A673 (cell line): ENCODE measurements at regions of chr14 and their contacts with region 1.

Region 1: DNA sequence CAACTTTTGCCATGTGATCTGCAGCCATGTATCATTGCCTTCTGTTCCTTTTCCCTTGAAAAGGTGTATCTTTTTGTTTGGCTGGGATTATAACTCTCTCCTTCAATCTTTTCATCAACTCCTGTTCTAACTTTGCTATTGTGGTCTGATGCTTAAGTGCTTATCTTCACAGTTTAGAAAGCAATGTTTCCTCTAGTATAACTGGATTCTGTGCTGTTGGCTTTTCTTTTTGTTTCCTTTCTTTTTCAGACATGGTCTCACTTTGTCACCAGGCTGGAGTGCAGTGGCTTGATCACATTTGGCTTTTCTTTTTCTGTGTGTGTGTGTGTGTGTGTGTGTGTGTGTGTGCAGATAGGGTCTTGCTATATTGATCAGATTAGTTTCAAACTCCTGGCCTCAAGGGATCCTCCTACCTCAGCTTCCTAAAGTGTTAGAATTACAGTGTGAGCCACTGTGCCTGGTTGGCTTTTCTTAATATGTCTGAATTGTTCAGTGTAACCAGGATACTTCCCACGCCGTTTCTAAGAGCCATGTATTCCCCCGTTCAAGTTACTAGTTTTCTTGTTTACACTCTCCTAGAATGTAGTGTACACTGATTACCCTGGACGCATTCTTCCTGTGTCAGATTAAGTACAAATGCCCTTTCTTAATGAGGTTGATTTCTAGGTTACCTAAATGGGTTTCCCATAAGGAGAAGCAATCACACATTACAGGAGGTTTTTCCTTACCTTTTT is 35.5 kb downstream of the JAG2 start:
- DNase-seq: no peak
- H3K4me3 ChIP-seq: no peak overlapping the region
- H3K27ac ChIP-seq: no peak overlapping the region
- H3K4me1 ChIP-seq: no peaks in the 10 kb centered on the region
- H3K27me3 ChIP-seq: no peaks in the 10 kb centered on the region
- CTCF ChIP-seq: no peak

Region 2: DNA sequence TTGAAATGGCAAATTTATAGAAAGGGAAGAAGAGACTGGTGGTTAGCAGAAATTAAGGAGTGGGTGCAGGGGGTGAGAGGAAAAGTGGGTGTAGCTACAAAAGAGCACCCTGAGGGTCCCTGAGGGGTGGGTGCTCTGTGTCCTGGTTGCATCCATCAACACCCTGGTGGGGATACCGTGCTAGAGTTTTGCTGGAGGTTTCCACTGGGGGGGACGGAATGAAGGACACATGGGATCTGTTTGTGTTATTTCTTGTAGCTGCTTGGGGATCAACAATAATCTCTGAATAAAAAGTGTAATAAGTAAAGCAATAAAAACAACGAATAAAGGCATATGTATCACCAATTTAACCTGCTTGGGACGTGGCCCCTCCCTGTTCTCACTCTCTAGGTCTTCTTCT is 819.4 kb before region 1 on chr14:
- CTCF ChIA-PET with region 1: no interaction called
- POLR2A ChIA-PET with region 1: interaction called, 25 read pairs
- intact Hi-C with region 1: no loop called
- DNase-seq: no peak
- H3K4me3 ChIP-seq: no peak overlapping the region
- H3K27ac ChIP-seq: no peak overlapping the region
- H3K4me1 ChIP-seq: no peaks in the 10 kb centered on the region
- H3K27me3 ChIP-seq: no peaks in the 10 kb centered on the region
- CTCF ChIP-seq: no peak

Region 3: DNA sequence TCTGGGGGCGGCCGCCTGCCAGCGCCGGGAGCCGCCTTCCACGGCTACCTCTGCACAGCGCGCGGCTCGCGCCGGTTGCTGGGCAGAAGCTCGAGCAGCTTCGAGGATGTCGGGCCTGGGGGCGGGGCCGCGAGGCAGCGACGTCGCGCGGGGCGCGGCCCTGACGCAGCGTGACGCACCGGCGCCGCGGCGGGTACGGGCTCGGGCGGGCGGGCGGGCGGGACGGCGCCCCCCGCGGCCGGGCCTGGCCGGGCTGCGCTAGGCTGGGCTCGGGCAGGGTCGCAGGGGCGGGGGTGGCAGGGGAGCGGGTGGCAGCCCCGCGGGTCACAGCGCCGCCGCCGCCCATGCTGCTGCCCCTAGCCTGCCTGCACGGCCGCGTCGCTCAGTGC is 115.3 kb after region 1 on chr14 and contains the start of gene BTBD6:
- CTCF ChIA-PET with region 1: no interaction called
- POLR2A ChIA-PET with region 1: no interaction called
- intact Hi-C with region 1: no loop called
- DNase-seq: peak; percentile 92
- H3K4me3 ChIP-seq: peak within 1 kb of the TSS; percentile 59
- H3K27ac ChIP-seq: peak within 1 kb of the TSS; percentile 81
- H3K4me1 ChIP-seq: peaks cover 5% of the 10 kb centered on the region
- H3K27me3 ChIP-seq: no peaks in the 10 kb centered on the region
- CTCF ChIP-seq: no peak
- total RNA-seq, gene BTBD6: 39.5 and 39.9 TPM in 2 replicates